Body of pancreas (tissue), 4 donors: ENCODE measurements at regions of chr19 and their contacts with region 1.

Region 1: DNA sequence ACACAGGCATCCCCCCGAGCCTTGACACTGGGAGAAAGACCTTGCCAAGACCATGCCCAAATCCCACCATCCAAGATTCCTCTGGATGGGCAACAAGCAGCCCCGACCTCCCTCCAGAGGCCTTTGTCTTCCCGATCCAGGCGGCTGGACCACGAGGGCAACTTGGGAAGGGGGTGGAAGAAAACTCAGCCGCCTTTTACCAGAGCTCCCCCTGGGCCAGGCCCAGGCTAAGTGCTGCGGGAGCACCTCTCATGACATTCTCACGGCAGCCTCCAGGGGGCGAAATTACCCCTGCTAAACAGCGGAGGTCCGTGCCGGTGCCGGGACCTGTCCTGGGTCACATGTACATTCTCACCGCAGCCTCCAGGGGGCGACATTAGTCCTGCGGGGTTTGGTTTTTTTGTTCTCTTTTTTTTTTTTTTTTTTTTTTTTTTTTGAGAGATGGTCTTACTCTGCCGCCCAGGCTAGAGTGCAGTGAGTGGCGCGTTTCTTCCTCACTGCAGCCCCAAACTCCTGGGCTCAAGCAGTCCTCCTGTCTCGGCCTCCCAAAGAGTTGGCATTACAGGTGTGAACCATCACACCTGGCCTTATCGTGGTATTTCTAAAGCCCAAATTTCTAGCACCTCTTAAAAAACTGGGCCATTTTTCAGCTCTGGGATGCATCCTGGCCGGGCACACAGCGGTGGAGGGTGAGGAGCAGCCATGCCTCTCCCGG is 2.1 kb upstream of the RSPH6A start:
- DNase-seq: peak; percentile 95 to 96 (median 96)
- ATAC-seq: peak; percentile 95
- H3K4me3 ChIP-seq: no peak overlapping the region
- H3K27ac ChIP-seq: peak overlapping the region in 1 of 4 donors; percentile 32
- H3K4me1 ChIP-seq: peaks cover 6% of the 10 kb centered on the region
- H3K27me3 ChIP-seq: no peaks in the 10 kb centered on the region
- CTCF ChIP-seq: peak; percentile 97 to 99 (median 99)
- POLR2A ChIP-seq: no peak

Region 2: DNA sequence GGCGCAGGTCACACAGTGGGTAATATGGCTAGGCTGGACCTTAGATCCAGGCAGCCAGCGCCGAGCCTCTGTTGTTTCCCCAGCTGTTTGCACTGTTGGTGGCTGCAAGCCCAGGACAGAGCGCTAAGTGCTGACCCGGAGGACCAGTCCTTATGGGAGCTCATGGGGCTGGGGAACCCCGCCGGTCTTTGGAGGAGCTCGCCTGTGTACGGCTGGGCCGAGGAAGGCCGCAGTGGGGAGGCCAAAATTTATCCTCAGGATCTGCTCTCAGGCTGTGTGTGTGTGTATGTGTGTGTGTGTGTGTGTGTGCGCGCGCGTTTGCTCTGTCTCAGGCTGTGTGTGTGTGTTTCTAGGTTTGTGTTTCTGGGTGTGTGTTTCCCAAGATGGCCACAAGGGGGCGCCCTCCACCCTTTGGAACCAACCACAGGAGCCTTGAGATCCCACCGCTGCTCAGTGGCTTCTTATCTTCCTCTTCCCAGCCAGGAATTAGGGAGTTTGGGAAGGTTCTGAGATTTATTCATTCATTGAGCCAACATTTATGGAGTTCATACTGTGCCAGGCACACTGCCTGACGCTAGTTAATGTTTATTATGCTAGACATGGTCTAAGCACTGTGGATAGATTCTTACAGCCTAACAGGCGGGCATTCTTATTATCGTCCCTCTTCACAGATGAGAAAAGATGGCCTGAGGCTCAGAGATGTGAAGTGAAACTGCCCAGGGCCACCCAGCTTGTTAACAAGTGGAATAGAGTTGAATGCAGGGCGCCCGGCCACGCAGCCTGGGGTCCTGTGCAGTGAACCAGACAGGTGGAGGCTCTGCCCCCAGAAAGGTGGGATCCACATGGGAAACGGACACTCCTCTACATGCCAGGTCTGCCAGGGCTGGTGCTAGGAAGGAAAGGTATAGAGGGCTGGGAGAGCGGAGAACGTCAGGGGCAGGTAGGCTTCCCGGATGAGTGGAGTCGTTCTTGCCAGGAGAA is 192.7 kb after region 1 on chr19:
- intact Hi-C with region 1: loop called (anchors 5 kb)
- DNase-seq: peak; percentile 71 to 82 (median 74)
- ATAC-seq: peak; percentile 72
- H3K4me3 ChIP-seq: no peak overlapping the region
- H3K27ac ChIP-seq: no peak overlapping the region
- H3K4me1 ChIP-seq: peaks cover 10% of the 10 kb centered on the region
- H3K27me3 ChIP-seq: no peaks in the 10 kb centered on the region
- CTCF ChIP-seq: peak; percentile 65 to 87 (median 70)
- POLR2A ChIP-seq: no peak